Body of pancreas (tissue), 4 donors: ENCODE measurements at regions of chr5 and their contacts with region 1.

Region 1: GRCh38 chr5:55226027-55226933 is 835 bp downstream of the MCIDAS start:
- DNase-seq: peak; percentile 41 to 62 (median 54)
- ATAC-seq: peak; percentile 50
- H3K4me3 ChIP-seq: peak overlapping the region; percentile 21 to 32
- H3K27ac ChIP-seq: peak overlapping the region in 3 of 4 donors; percentile 24 to 62 (median 47)
- H3K4me1 ChIP-seq: peaks cover 29% of the 10 kb centered on the region
- H3K27me3 ChIP-seq: no peaks in the 10 kb centered on the region
- CTCF ChIP-seq: peak; percentile 20 to 61 (median 51)
- POLR2A ChIP-seq: peak in 1 of 3 donors; percentile 4

Region 2: GRCh38 chr5:55180016-55180415 is 46.3 kb before region 1 on chr5:
- intact Hi-C with region 1: loop called (anchors 5 kb)
- DNase-seq: no peak
- ATAC-seq: no peak
- H3K4me3 ChIP-seq: no peak overlapping the region
- H3K27ac ChIP-seq: no peak overlapping the region
- H3K4me1 ChIP-seq: peaks cover 15% of the 10 kb centered on the region
- H3K27me3 ChIP-seq: no peaks in the 10 kb centered on the region
- CTCF ChIP-seq: no peak
- POLR2A ChIP-seq: no peak